ENCODE measurements at regions of chr13 and their contacts with region 1.

Region 1: GRCh38 chr13:111531505-111531904 is 211.1 kb downstream of the TEX29 start:
- DNase-seq: no peak
- H3K4me3 Mint-ChIP-seq: no peak overlapping the region
- H3K27ac Mint-ChIP-seq: no peak overlapping the region
- H3K4me1 Mint-ChIP-seq: peaks cover 7% of the 10 kb centered on the region
- H3K27me3 Mint-ChIP-seq: peaks cover 46% of the 10 kb centered on the region

Region 2: DNA sequence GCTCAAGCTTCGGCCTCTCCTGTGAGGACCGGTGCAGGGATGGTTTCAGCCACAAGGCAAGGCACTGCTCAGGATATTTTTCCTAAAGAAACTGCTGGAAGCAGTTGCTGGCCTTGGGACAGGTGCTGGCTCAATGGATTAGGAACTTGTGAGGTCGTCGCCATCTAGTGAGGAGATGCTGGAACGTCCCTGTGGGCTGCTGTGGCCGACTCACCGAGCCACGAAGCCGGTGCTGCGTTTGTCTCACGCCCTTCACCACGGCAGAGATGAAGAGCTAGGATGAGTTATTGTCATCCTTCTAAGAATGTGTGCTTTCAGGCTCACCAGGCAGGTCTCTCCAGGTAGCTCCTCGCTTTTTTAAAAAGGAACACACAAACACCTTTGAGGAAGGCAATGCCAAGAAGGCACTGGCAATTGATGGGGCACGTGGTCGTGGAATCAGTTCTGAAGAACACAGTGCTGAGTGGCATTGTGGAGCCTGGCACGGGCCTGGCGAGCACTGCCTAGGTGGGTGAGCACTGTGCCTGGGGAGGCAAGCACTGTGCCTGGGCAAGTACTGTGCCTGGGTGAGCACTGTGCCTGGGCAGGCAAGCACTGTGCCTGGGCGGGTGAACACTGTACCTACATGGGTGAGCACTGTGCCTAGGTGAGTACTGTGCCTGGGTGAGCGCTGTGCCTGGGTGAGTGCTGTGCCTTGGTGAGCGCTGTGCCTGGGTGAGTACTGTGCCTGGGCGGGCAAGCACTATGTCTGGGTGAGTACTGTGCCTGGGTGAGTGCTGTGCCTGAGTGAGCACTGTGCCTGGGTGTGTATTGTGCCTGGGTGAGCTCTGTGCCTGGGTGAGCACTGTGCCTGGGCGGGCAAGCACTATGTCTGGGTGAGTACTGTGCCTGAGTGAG is 70.7 kb before region 1 on chr13:
- CTCF ChIA-PET with region 1: no interaction called
- intact Hi-C with region 1: no loop called
- DNase-seq: peak; percentile 32
- H3K4me3 Mint-ChIP-seq: no peak overlapping the region
- H3K27ac Mint-ChIP-seq: no peak overlapping the region
- H3K4me1 Mint-ChIP-seq: peaks cover 2% of the 10 kb centered on the region
- H3K27me3 Mint-ChIP-seq: peaks cover 10% of the 10 kb centered on the region

Region 3: GRCh38 chr13:111549464-111549863 is 18.0 kb after region 1 on chr13:
- CTCF ChIA-PET with region 1: no interaction called
- intact Hi-C with region 1: no loop called
- DNase-seq: no peak
- H3K4me3 Mint-ChIP-seq: no peak overlapping the region
- H3K27ac Mint-ChIP-seq: no peak overlapping the region
- H3K4me1 Mint-ChIP-seq: no peaks in the 10 kb centered on the region
- H3K27me3 Mint-ChIP-seq: peaks cover 5% of the 10 kb centered on the region

Region 4: DNA sequence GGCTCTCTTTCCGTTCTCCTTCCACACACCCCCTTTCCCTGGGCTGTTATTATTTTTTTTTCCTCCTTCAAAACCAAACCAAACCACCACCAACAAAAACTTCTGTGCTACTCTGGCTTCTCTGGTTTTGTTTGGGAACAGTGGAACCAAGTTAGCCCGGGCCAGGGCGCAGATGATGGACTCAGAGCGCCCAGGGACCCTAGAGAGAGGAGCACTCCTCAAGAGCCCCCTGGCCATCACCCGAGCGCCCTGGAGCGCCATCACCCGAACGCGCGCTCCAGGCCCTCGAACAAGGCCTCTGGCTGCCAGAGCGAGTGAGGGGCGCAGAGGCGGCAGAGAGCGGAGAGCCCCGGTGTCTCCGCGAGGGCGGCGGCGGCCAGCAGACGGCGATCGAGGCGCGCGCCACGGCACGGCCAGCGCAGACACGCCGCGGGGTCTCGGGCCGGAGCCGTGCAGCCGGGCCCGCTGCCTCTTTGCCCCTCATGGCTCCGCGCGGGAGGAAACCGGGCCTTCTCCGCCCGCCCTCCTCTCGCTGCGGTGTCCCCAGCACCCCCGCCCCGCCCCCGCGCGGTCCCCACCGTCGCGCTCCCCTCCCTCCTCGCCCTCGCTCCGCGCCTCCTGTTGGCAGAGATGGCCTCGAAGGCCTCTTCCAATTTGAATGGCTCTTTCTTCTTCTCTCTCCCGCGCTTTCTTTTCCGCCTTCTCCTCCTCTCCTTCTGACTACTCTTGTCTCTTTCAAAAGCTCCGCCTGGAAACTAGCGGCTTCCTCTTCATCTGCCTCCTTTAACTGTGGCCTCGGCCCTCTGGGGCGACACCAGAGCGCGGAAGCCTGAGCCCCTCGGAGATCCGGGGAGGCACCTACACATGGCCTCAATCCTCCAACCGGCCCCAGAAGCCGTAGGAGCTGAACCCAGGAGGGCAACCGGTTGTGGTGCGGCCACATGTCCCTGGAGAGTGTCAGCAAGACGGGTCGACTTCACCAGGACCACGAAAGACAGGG is 531.4 kb after region 1 on chr13:
- CTCF ChIA-PET with region 1: no interaction called
- intact Hi-C with region 1: loop called (anchors 5 kb)
- DNase-seq: no peak
- H3K4me3 Mint-ChIP-seq: no peak overlapping the region
- H3K27ac Mint-ChIP-seq: no peak overlapping the region
- H3K4me1 Mint-ChIP-seq: peaks cover 13% of the 10 kb centered on the region
- H3K27me3 Mint-ChIP-seq: peaks cover 75% of the 10 kb centered on the region

Measured in activated naive CD4-positive, alpha-beta T cell treated with anti-CD3 and anti-CD28 coated beads for 36 hours (primary cell).